ENCODE measurements at regions of chr11 and their contacts with region 1.

Region 1: GRCh38 chr11:129865701-129866100 is 29.7 kb downstream of the NFRKB start:
- DNase-seq: no peak
- H3K4me3 ChIP-seq: no peak overlapping the region
- H3K4me3 Mint-ChIP-seq: no peak overlapping the region
- H3K27ac ChIP-seq: peak overlapping the region in 1 of 2 donors; percentile 3
- H3K27ac Mint-ChIP-seq: peak overlapping the region in 2 of 7 donors; percentile 35 to 37
- H3K4me1 ChIP-seq: no peaks in the 10 kb centered on the region
- H3K4me1 Mint-ChIP-seq: peaks cover 3% of the 10 kb centered on the region
- H3K27me3 ChIP-seq: no peaks in the 10 kb centered on the region
- H3K27me3 Mint-ChIP-seq: no peaks in the 10 kb centered on the region
- CTCF ChIP-seq: no peak

Region 2: GRCh38 chr11:130390071-130390758 is 524.5 kb after region 1 on chr11:
- intact Hi-C with region 1: loop called in 1 of 2 experiments (anchors 5 kb)
- DNase-seq: no peak
- H3K4me3 ChIP-seq: no peak overlapping the region
- H3K4me3 Mint-ChIP-seq: no peak overlapping the region
- H3K27ac ChIP-seq: no peak overlapping the region
- H3K27ac Mint-ChIP-seq: peak overlapping the region in 1 of 7 donors; percentile 12
- H3K4me1 ChIP-seq: no peaks in the 10 kb centered on the region
- H3K4me1 Mint-ChIP-seq: no peaks in the 10 kb centered on the region
- H3K27me3 ChIP-seq: no peaks in the 10 kb centered on the region
- H3K27me3 Mint-ChIP-seq: peaks cover 4 to 9% (median 8%) of the 10 kb centered on the region in 3 donors
- CTCF ChIP-seq: no peak

Measured in CD14-positive monocyte (primary cell).